ENCODE measurements at regions of chr1 and their contacts with region 1.

Region 1: DNA sequence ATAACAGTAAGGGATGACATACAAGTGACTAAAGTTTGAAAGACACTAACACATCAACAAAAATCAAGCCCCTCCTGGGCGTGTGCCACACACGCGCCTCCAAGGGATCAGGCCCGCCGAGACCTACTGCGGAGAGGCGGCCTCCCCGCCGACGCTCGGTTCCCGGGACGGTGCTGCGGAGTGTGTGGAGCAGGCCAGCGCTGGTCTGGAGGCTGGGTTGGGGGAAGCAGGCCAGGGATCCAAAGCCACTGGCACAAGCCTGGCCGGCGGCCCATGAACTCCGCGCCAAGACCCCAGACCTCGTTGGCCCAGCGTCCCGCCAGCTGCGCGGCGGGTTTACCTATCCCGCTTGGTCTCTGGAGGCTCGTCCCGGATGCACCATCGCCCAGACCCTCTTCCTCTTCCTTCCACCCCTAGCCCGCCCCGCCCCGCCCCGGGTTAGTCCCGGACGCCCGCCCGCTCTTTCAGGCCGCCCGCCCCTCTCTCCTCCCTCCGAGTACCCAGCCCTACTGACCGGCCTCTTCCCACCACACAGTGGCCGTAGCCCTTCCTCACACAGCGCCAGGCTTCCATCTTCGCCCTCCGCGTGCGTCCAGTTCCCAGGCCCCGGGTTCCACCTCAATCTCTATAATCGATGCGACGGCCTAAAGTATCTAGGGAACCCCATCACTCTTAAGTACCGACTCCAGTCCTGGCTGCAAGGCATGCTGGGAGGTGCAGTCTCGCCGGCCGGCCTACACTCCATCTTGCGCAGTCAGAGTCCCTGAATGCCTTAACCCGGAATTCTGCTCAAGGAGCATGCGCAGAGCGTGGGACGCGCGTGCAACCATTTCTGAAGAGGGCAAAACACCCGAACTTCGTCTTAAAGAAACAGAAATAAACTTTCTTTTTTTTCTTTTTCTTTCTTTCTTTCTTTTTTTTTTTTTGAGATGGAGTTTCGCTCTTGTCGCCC is at the start of gene ANGEL2:
- DNase-seq: peak; percentile 95
- H3K4me3 ChIP-seq: peak within 1 kb of the TSS; percentile 72 to 97 (median 96)
- H3K27ac ChIP-seq: peak within 1 kb of the TSS; percentile 76
- H3K4me1 ChIP-seq: peaks cover 10% of the 10 kb centered on the region
- H3K27me3 ChIP-seq: no peaks in the 10 kb centered on the region
- CTCF ChIP-seq: no peak
- total RNA-seq, gene ANGEL2: 28.5 to 38.3 TPM

Region 2: DNA sequence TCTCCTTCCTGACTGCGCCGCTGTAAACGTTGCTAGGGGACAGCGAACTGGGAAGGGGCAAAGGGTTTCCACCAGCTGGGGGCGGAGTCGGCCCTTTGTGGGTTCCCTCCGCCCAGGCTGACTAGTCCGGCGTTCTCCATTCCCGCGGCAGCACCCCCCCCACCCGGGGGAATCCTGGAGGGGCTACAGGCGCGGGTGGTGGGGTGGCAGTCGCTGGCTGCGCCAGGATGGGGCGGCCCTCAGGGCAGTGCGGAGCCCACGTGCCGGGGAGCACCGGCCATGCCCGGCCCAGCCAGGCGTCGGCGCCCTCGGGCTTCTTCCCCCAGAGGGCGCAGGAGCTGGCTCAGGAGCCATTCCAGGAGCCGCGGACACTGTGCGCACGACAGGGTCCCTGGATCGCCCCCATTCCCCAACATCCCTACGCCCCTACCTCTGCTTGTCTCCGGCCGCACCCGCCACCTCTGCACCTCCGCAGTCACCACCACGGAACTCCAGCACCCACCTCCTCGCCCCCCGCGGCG is 316.2 kb before region 1 on chr1:
- CTCF ChIA-PET with region 1: no interaction called
- dilution Hi-C with region 1: no loop called
- in situ Hi-C with region 1: no loop called
- intact Hi-C with region 1: no loop called
- DNase-seq: no peak
- H3K4me3 ChIP-seq: peak overlapping the region; percentile 33 to 53 (median 52)
- H3K27ac ChIP-seq: no peak overlapping the region
- H3K4me1 ChIP-seq: peaks cover 20% of the 10 kb centered on the region
- H3K27me3 ChIP-seq: peaks cover 28% of the 10 kb centered on the region
- CTCF ChIP-seq: peak in 1 of 2 donors; percentile 52

Region 3: DNA sequence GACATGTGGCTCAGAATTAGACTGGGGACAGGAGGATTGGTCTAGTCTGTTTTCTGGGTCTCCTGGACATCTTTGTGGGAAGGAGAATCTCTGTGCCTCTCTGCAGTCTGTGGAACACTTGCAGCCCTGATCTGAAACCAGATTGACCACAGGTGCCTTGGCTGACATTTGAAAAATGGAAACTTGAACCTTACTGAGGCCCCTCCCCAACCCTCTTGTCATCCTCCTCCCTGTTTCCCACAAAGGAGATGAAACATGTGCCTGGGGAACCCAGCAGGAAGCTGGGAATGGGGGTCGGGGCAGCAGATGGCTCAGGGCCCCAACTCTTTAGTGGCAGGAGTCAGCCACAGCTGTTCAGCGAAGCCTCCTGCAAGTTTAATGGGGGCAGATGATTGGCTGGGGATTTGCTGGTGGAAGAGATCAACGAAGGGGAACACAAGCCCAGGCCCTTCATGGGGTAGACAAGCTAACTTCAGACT is 47.0 kb before region 1 on chr1:
- CTCF ChIA-PET with region 1: no interaction called
- dilution Hi-C with region 1: no loop called
- in situ Hi-C with region 1: no loop called
- intact Hi-C with region 1: no loop called
- DNase-seq: no peak
- H3K4me3 ChIP-seq: no peak overlapping the region
- H3K27ac ChIP-seq: no peak overlapping the region
- H3K4me1 ChIP-seq: no peaks in the 10 kb centered on the region
- H3K27me3 ChIP-seq: no peaks in the 10 kb centered on the region
- CTCF ChIP-seq: no peak

Region 4: DNA sequence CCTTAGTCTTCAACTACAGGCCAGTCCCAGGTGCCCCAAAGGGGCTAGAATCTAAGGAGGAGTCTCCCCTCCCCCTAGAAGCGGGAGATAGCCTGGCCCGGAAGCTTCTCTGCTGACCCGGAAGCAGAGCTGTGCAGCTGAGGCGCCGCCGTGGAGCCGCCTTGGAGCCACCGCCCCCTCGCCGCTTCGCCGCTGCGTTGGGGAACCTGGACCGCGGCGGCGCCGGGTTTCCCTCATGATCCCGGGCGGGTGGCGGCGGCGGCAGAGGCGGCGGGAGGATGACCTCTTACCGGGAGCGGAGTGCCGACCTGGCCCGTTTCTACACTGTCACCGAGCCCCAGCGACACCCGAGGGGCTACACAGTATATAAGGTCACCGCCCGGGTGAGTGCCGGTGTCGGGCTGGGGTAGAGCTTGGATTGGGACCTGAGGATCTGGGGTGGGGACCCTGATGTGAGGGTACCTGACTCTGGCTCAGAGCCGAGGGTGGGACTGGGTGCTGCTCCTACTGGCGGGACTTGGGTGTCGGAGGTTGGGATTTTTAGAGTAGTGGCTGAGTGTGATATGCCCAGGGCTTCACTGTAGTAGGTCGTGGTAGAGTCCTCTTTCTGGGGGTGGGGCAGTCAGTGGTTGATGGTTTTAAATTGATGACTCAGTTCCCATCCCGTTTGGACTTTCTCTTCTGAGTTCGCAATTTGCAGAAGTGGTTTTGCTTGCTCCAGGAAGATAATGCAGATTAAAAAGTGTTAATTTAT is 35.9 kb after region 1 on chr1 and contains the start of gene RPS6KC1:
- CTCF ChIA-PET with region 1: no interaction called
- dilution Hi-C with region 1: no loop called
- in situ Hi-C with region 1: no loop called
- intact Hi-C with region 1: loop called (anchors 1 kb)
- DNase-seq: peak; percentile 78
- H3K4me3 ChIP-seq: peak within 1 kb of the TSS; percentile 96 to 98 (median 98)
- H3K27ac ChIP-seq: peak within 1 kb of the TSS; percentile 56
- H3K4me1 ChIP-seq: peaks cover 18% of the 10 kb centered on the region
- H3K27me3 ChIP-seq: no peaks in the 10 kb centered on the region
- CTCF ChIP-seq: no peak
- total RNA-seq, gene RPS6KC1: 17.2 to 23.8 TPM

Region 5: GRCh38 chr1:213070406-213070805 is 55.0 kb after region 1 on chr1:
- CTCF ChIA-PET with region 1: no interaction called
- dilution Hi-C with region 1: no loop called
- in situ Hi-C with region 1: no loop called
- intact Hi-C with region 1: loop called (anchors 1 kb)
- DNase-seq: peak; percentile 49
- H3K4me3 ChIP-seq: no peak overlapping the region
- H3K27ac ChIP-seq: no peak overlapping the region
- H3K4me1 ChIP-seq: no peaks in the 10 kb centered on the region
- H3K27me3 ChIP-seq: no peaks in the 10 kb centered on the region
- CTCF ChIP-seq: peak; percentile 12 to 48